PC-9 (cell line): ENCODE measurements at regions of chr22 and their contacts with region 1.

Region 1: DNA sequence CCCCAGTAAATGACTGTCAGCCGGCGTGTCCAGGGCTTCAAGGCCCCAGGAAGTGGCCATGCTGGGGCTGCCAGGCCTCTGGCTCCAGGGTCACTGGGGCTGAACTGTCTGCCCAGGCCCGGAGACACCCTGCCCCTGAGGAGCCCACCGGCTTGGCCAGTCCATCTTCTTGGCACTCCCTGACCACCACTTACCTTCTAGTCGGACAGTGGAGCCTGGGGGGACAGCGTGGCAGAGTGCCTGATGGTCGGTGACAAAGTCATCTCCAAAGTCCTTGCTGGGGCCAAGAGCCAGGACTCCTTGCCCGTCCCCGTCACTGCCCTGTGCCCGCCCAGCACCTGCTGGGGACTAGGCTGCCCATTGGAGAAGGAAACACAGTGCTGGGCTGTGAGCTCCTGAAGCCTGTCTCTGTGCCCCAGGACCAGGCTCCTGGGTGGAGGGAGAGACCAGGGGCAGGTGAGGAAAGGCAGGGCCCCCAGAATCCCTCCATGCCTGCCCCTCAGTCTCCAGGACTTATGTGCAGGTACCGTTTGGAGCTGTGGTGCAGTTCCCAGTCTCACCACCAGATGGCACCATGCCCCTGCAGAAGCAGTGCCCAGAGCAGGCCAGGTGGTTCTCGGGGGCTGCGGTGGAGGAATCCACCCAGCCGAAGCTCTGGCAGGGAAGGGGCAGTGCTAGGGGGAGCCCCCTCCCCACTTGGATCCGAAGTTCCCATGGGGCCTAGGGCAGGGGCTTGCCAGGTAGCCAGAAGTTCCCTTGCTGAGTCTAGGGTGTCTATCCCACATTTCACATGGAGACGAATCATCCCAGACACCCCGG is 6.0 kb upstream of the CCDC188 start:
- DNase-seq: peak; percentile 38 to 73
- H3K4me3 ChIP-seq: no peak overlapping the region
- H3K27ac ChIP-seq: no peak overlapping the region
- H3K4me1 ChIP-seq: no peaks in the 10 kb centered on the region
- H3K27me3 ChIP-seq: peaks cover 15% of the 10 kb centered on the region
- CTCF ChIP-seq: peak; percentile 97

Region 2: DNA sequence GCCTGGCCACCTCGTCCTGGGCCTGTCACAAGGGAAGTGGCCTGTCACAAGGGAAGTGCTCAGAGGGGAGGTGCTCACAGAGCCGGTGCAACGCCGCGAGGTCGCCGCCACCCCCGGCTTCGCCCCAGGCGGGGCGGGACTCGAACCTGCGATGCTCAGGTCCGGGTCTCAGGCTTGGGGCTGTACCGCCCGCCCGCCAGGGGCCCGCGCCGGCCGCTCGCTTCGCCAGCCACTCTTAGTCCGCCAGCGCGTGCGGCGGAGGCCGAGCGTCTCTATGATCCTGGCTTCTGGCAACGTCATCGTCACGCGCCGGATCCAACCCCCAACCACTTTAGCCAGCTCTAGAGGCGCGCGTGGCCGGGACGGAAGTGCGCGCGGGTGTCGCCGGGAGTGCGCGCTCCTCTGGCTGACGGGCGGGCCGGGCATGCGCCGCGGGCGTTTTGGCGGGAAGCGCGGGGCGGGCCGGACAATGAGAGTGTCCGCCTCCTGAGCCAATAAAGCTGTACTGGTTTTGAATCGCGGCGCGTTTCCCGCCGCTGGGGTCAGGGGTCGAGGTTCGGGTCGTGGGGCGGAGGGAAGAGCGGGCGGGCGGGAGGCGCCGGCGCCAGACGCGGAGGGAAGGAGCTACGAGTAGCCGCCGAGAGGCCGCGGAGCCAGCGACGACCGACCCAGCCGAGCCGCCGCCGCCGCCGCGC is 39.7 kb before region 1 on chr22 and contains the start of gene TRMT2A:
- CTCF ChIA-PET with region 1: no interaction called
- POLR2A ChIA-PET with region 1: interaction called, 11 read pairs
- intact Hi-C with region 1: no loop called
- DNase-seq: peak; percentile 80 to 95
- H3K4me3 ChIP-seq: peak within 1 kb of the TSS; percentile 75
- H3K27ac ChIP-seq: 0 out of 2 replicates have a peak within 1 kb of the TSS, but pooled peaks have one; percentile 28
- H3K4me1 ChIP-seq: peaks cover 9% of the 10 kb centered on the region; the same call in 1 of the 2 replicates
- H3K27me3 ChIP-seq: no peaks in the 10 kb centered on the region
- CTCF ChIP-seq: no peak
- total RNA-seq, gene TRMT2A: 31.5 and 32.7 TPM in 2 replicates

Region 3: DNA sequence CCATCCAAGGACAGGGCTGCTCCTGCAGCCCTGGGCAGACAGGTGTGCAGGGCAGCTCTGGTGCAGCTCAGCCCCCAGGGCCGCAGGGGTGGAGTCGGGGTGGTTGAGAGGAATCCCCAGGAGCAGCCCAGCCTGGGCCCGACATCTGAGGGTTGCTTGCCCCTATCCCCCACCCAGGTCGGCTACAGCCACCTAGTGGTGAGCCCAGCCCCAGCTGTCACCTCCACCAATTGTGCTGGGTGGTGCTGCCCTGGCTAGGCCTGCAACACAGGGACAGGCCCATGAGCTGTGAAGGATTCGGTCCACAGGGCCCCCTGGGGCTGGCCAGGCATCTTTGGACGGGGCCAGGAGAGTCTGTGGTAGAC is 81.7 kb after region 1 on chr22:
- CTCF ChIA-PET with region 1: no interaction called
- POLR2A ChIA-PET with region 1: no interaction called
- intact Hi-C with region 1: loop called (anchors 1 kb)
- DNase-seq: peak in 1 of 2 experiments; percentile 37
- H3K4me3 ChIP-seq: no peak overlapping the region
- H3K27ac ChIP-seq: no peak overlapping the region
- H3K4me1 ChIP-seq: no peaks in the 10 kb centered on the region
- H3K27me3 ChIP-seq: peaks cover 10% of the 10 kb centered on the region; the same call in 1 of the 2 replicates
- CTCF ChIP-seq: peak; percentile 53; the same call in 1 of the 2 replicates

Region 4: GRCh38 chr22:20279662-20280134 is 122.9 kb after region 1 on chr22:
- CTCF ChIA-PET with region 1: interaction called, 11 read pairs
- POLR2A ChIA-PET with region 1: no interaction called
- intact Hi-C with region 1: no loop called
- DNase-seq: peak in 1 of 2 experiments; percentile 41
- H3K4me3 ChIP-seq: no peak overlapping the region
- H3K27ac ChIP-seq: no peak overlapping the region
- H3K4me1 ChIP-seq: no peaks in the 10 kb centered on the region
- H3K27me3 ChIP-seq: no peaks in the 10 kb centered on the region; the same call in 1 of the 2 replicates
- CTCF ChIP-seq: no peak

Region 5: GRCh38 chr22:20456064-20456721 is 299.4 kb after region 1 on chr22:
- CTCF ChIA-PET with region 1: interaction called, 3 read pairs
- POLR2A ChIA-PET with region 1: no interaction called
- intact Hi-C with region 1: loop called (anchors 10 kb)
- DNase-seq: peak; percentile 38 to 41
- H3K4me3 ChIP-seq: no peak overlapping the region
- H3K27ac ChIP-seq: no peak overlapping the region
- H3K4me1 ChIP-seq: no peaks in the 10 kb centered on the region
- H3K27me3 ChIP-seq: no peaks in the 10 kb centered on the region
- CTCF ChIP-seq: peak; percentile 74